Activated CD4-positive, alpha-beta T cell treated with anti-CD3 and anti-CD28 coated beads, Interleukin-2, amount 10 ng/mL, durations not matched to agents 7 days and 5 days (primary cell): ENCODE measurements at regions of chr15 and their contacts with region 1.

Region 1: GRCh38 chr15:101641166-101641764 is 10.9 kb downstream of the TM2D3 start:
- DNase-seq: peak; percentile 83
- H3K4me3 Mint-ChIP-seq: no peak overlapping the region
- H3K27ac Mint-ChIP-seq: peak overlapping the region; percentile 93
- H3K4me1 Mint-ChIP-seq: peaks cover 37% of the 10 kb centered on the region
- H3K27me3 Mint-ChIP-seq: no peaks in the 10 kb centered on the region

Region 2: GRCh38 chr15:101288908-101289513 is 352.3 kb before region 1 on chr15:
- CTCF ChIA-PET with region 1: interaction called, 16 read pairs
- POLR2A ChIA-PET with region 1: no interaction called
- DNase-seq: peak; percentile 58
- H3K4me3 Mint-ChIP-seq: no peak overlapping the region
- H3K27ac Mint-ChIP-seq: peak overlapping the region; percentile 58
- H3K4me1 Mint-ChIP-seq: peaks cover 54% of the 10 kb centered on the region
- H3K27me3 Mint-ChIP-seq: no peaks in the 10 kb centered on the region